Left ventricle myocardium superior (tissue), 1 donor: ENCODE measurements at regions of chr3 and their contacts with region 1.

Region 1: GRCh38 chr3:115217678-115218451 is 70.8 kb upstream of the ZBTB20 start:
- DNase-seq: no peak
- ATAC-seq: peak; percentile 82

Region 2: DNA sequence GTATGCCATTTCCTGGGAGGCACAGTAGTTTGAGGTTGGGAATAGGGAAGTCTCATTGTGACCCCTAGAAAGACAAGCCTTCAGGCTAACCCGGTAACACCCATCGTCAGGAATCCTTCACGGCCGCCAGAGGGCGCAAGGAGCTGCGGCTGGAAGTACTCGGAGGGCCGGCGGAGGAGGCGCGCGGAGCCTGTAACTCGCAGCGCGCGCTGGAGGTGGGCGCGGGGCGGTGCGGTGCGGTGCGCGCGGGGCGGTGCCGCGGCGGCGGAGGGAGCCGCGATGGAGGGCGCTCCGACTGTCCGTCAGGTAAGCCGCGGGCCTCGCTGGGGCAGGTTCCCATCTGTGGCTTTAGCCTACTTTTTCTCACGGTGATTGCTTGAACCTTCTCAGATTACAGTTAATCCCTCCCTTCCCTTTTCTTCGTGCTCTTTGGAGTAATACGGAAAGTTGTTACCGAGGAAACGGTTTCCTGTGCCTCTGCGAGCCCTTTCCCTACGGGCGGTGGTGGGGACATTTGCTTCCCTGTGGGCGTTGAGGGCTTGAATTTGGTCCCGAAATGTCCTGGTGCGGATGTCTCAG is 1379.1 kb before region 1 on chr3 and contains the start of gene GRAMD1C:
- intact Hi-C with region 1: no loop called
- DNase-seq: peak; percentile 91
- ATAC-seq: peak; percentile 100
- total RNA-seq, gene GRAMD1C: 3.4 TPM

Region 3: GRCh38 chr3:115550285-115550761 is 332.5 kb after region 1 on chr3:
- intact Hi-C with region 1: no loop called
- DNase-seq: peak; percentile 38
- ATAC-seq: peak; percentile 97

Region 4: GRCh38 chr3:115571413-115571812 is 353.5 kb after region 1 on chr3:
- intact Hi-C with region 1: loop called (anchors 10 kb)
- DNase-seq: peak; percentile 14
- ATAC-seq: peak; percentile 32

Region 5: GRCh38 chr3:115692887-115693524 is 475.1 kb after region 1 on chr3:
- intact Hi-C with region 1: loop called (anchors 2 kb)
- DNase-seq: peak; percentile 60
- ATAC-seq: peak; percentile 98